Common myeloid progenitor, CD34-positive (primary cell): ENCODE measurements at regions of chr22 and their contacts with region 1.

Region 1: GRCh38 chr22:37538590-37539357 is 19.6 kb upstream of the CARD10 start:
- DNase-seq: peak; percentile 91 to 97 (median 96)
- H3K4me3 ChIP-seq: peak overlapping the region in 1 of 7 experiments; percentile 38
- H3K27ac ChIP-seq: no peak overlapping the region
- H3K4me1 ChIP-seq: peaks cover 4 to 40% (median 28%) of the 10 kb centered on the region in 4 experiments
- H3K27me3 ChIP-seq: peaks cover 0 to 16% (median 6%) of the 10 kb centered on the region in 5 experiments

Region 2: DNA sequence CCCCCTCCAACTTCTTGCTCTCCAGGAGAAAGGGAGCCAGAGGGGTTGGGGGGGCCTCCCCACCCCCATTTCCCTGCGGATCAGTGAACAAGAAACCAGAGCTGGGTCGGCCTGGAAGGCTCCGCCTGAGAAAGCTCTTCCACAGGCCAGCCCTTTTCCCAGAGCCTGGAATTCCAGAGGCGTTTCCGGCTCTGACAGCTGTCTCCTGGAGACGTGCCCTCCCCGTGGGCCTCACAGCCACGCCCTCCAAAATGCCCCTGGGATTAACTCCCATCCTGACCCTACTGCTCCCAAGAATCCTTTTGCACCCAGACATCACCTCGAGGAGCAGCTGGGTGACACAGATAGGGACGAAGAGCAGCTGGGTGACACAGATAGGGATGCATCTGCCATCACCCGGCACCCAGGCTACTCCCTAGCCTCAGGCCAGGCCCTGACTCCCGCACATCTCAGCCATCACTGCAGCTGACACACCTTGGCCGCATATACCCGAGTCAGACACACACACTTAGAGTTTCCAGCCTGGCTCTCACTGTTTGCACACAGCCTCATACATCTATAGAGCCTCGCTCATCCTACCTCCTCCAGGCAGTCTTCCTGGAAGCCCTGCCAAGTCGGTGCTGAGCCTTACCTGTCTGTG is 13.9 kb after region 1 on chr22:
- CTCF ChIA-PET with region 1: interaction called, 515 read pairs
- POLR2A ChIA-PET with region 1: no interaction called
- DNase-seq: no peak
- H3K4me3 ChIP-seq: no peak overlapping the region
- H3K27ac ChIP-seq: no peak overlapping the region
- H3K4me1 ChIP-seq: peaks cover 0 to 4% (median 2%) of the 10 kb centered on the region in 4 experiments
- H3K27me3 ChIP-seq: peaks cover 3 to 24% (median 17%) of the 10 kb centered on the region in 5 experiments